ENCODE measurements at regions of chr3 and their contacts with region 1.

Region 1: DNA sequence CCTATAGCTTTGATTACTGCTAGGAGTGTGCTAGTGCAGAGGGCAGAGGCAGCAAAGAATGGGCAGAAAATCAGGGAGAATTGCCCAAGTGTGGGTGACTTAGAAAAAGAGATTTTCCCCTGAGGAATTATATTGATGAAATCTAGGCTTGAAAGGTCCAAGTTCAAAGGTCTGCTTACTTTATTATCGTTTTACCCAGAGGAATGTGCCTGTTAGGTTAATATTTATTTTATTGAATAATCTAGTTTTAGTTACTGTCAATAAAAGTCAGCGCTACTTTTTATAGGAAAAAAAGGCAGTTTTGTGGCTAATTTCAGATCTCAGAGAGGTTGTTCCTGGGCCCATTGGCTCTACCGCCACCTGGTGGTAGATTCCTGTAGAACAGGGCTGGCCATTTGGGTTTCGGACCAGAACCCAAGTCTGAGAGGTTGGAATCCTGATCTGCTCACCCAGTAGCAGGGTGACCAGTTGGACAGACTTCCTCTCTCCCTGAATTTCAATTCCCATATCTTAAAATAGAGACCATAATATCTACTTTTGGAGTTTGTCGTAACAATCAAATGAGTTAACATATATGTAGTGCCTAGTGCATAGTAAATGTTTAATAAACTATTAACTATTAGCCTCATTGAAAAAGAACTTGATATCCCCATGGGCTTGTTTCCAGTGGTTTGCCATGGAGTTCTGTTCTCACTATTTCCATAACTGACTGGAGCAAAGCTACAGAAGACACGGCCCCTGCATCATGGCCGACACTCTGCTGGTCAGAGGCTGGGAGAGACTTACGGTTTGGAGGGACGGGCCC is 62.7 kb upstream of the ZNF148 start:
- DNase-seq: peak; percentile 21
- H3K4me3 ChIP-seq: no peak overlapping the region
- H3K27ac ChIP-seq: no peak overlapping the region
- H3K4me1 ChIP-seq: no peaks in the 10 kb centered on the region
- H3K27me3 ChIP-seq: no peaks in the 10 kb centered on the region
- CTCF ChIP-seq: peak; percentile 85 to 96 (median 90)
- POLR2A ChIP-seq: no peak

Region 2: GRCh38 chr3:124761250-124761796 is 676.5 kb before region 1 on chr3:
- intact Hi-C with region 1: loop called (anchors 10 kb)
- DNase-seq: peak; percentile 84
- H3K4me3 ChIP-seq: no peak overlapping the region
- H3K27ac ChIP-seq: peak overlapping the region; percentile 55 to 62
- H3K4me1 ChIP-seq: peaks cover 7% of the 10 kb centered on the region
- H3K27me3 ChIP-seq: no peaks in the 10 kb centered on the region
- CTCF ChIP-seq: peak; percentile 89 to 97 (median 94)
- POLR2A ChIP-seq: no peak

Region 3: DNA sequence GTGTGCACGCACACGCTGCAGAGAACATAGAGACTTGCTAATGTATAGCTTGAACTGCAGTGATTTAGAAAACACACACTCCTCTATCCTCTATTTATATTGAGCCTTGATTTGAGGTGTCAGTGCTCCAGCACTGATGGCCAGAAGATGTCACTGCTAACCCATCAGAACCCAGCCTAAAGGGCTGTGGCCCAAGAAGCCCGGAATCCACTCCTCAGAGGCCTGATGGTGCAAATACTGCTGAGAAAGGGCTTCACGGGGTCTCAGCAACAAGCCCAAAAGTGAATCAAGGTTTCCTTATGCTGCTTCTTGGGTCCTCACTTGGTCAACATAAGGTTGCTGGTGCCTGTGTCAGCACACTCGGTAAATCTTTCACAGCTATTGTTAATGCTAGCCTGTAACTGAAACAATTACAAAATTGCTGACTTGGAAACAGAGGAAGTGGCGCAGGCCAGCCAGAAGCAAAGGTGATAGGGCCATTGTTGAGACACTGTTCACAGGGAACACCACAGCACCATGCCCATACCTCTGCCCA is 442.3 kb before region 1 on chr3:
- intact Hi-C with region 1: loop called (anchors 5 kb)
- DNase-seq: peak; percentile 52
- H3K4me3 ChIP-seq: no peak overlapping the region
- H3K27ac ChIP-seq: no peak overlapping the region
- H3K4me1 ChIP-seq: no peaks in the 10 kb centered on the region
- H3K27me3 ChIP-seq: no peaks in the 10 kb centered on the region
- CTCF ChIP-seq: peak; percentile 24 to 82 (median 69)
- POLR2A ChIP-seq: no peak

Region 4: DNA sequence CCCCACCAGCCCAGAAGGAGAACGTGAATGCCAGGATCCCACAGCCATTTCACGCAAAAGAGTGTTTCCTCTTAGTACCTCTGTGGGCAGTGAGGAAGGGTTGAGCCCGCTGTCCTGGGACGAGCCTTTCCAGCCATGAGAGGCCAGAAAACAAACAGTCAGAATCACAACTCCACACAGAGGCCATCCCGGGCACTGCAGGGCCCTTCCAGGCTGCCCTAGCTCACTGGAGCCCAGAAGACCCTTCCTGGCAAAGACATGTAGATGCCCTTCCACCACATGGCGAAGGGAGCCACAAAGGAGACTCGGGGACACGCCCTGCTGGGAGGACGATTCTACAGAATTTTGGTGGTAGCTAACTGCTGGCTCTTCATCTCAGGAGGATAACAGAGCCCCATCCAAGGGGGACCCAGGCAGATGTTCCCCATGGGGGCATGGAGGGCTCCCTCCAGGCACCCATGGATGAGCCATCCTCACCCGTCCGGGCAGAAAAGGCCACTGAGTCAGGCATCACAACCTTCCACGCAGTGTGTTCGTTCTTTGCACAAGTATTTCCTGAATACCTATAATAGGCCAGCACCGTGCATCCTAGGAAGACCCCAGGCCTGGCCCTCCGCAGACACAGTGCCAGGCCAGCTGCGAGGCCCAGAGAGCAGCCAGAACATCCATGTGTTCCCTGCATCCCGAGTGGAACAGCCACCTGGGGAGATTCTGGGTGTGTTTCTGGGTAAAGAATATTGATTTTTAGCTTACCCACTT is 272.5 kb before region 1 on chr3:
- intact Hi-C with region 1: loop called (anchors 10 kb)
- DNase-seq: no peak
- H3K4me3 ChIP-seq: no peak overlapping the region
- H3K27ac ChIP-seq: no peak overlapping the region
- H3K4me1 ChIP-seq: no peaks in the 10 kb centered on the region
- H3K27me3 ChIP-seq: no peaks in the 10 kb centered on the region
- CTCF ChIP-seq: peak in 3 of 4 experiments; percentile 22 to 50 (median 34)
- POLR2A ChIP-seq: no peak

Region 5: GRCh38 chr3:125212509-125213244 is 225.2 kb before region 1 on chr3 and contains the start of gene SLC12A8:
- intact Hi-C with region 1: no loop called
- DNase-seq: no peak
- H3K4me3 ChIP-seq: peak within 1 kb of the TSS; percentile 52 to 53
- H3K27ac ChIP-seq: peak within 1 kb of the TSS in 1 of 2 donors; percentile 18
- H3K4me1 ChIP-seq: no peaks in the 10 kb centered on the region
- H3K27me3 ChIP-seq: no peaks in the 10 kb centered on the region
- CTCF ChIP-seq: no peak
- POLR2A ChIP-seq: no peak
- total RNA-seq, gene SLC12A8: 6.5 to 16.4 TPM